ENCODE measurements at regions of chr1 and their contacts with region 1.

Region 1: DNA sequence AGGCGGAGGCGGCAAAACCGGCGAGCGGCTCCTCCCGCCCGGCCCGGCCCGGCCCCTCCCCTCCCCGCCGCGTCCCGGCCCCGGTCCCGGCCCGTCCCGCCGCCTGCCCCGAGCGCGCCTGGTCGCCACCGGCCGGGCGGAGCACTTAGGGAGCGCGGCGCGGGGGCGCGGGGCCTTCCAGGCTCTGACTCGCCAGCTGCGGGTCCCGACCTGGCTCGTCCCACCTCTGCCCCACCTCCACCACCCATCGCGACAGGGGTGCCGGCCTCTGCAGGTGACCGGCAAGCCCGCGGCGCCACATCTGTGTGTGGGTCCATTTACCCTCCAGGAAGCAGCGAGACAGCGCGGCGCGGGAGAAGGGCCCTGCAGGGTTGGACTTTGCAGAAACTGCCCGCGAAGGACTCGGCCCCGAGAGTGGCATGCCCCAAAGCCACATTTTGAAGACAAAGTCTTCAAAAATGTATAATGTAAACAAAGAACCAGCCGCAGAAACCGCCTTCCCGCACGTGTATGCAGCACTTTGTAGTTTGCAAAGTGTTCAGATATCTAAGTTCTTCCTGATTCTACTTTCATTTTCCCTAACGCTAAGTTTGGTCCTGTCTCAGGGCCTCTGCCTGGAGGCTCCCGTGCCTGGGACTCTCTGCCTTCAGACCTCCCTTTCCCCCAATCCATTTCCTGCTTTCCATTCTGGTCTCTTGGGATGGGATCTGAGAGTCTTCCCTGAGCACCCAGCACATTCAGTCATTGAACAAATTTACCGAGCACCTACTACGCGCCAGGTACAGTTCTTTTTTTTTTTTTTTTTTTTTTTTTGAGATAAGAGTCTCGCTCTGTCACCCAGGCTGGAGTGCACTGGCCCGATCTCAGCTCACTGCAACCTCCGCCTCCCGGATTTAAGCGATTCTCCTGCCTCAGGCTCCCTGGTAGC is at the start of gene TMCO4:
- DNase-seq: peak; percentile 52 to 55
- H3K4me3 ChIP-seq: peak within 1 kb of the TSS; percentile 74
- H3K27ac ChIP-seq: no peak within 1 kb of the TSS
- H3K4me1 ChIP-seq: peaks cover 9% of the 10 kb centered on the region; the same call in 1 of the 2 replicates
- H3K27me3 ChIP-seq: no peaks in the 10 kb centered on the region
- CTCF ChIP-seq: no peak
- total RNA-seq, gene TMCO4: 22.6 and 22.7 TPM in 2 replicates

Region 2: DNA sequence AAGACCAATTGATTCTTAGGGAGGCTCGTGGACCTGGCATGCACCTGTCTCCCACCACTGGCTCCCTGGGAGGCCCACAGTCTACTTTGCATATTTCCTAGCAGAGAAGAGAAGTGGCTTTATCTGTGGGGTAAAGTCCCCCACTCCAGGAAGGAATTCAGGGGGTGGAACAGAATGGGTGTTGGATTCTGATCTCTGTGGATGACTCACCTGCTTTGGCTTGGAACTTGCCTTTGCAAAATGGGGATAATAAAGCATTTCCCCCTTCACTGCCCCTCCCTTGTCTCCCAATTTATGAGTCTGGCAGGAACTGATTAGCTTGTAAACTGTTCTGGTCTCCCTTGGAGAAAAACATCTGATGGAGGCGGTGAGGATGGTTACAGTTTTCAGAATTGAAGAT is 60.9 kb after region 1 on chr1:
- CTCF ChIA-PET with region 1: no interaction called
- POLR2A ChIA-PET with region 1: no interaction called
- intact Hi-C with region 1: loop called (anchors 10 kb)
- DNase-seq: peak in 1 of 2 experiments; percentile 36
- H3K4me3 ChIP-seq: no peak overlapping the region
- H3K27ac ChIP-seq: no peak overlapping the region
- H3K4me1 ChIP-seq: no peaks in the 10 kb centered on the region
- H3K27me3 ChIP-seq: no peaks in the 10 kb centered on the region
- CTCF ChIP-seq: no peak

Region 3: GRCh38 chr1:19882111-19883071 is 82.2 kb after region 1 on chr1 and contains the start of gene OTUD3:
- CTCF ChIA-PET with region 1: interaction called, 5 read pairs
- POLR2A ChIA-PET with region 1: no interaction called
- intact Hi-C with region 1: loop called (anchors 1 kb)
- DNase-seq: peak; percentile 82 to 92
- H3K4me3 ChIP-seq: peak within 1 kb of the TSS; percentile 94
- H3K27ac ChIP-seq: peak within 1 kb of the TSS; percentile 61; the same call in 1 of the 2 replicates
- H3K4me1 ChIP-seq: peaks cover 19% of the 10 kb centered on the region
- H3K27me3 ChIP-seq: no peaks in the 10 kb centered on the region
- CTCF ChIP-seq: peak; percentile 82
- total RNA-seq, gene OTUD3: 8.5 and 9.7 TPM in 2 replicates

Measured in PC-9 (cell line).